ENCODE measurements at regions of chr1 and their contacts with region 1.

Region 1: GRCh38 chr1:214584805-214585766 is 17.9 kb upstream of the CENPF start:
- DNase-seq: no peak
- ATAC-seq: peak; percentile 33
- H3K4me3 Mint-ChIP-seq: no peak overlapping the region
- H3K27ac Mint-ChIP-seq: no peak overlapping the region
- H3K4me1 Mint-ChIP-seq: no peaks in the 10 kb centered on the region
- H3K27me3 Mint-ChIP-seq: peaks cover 11% of the 10 kb centered on the region

Region 2: DNA sequence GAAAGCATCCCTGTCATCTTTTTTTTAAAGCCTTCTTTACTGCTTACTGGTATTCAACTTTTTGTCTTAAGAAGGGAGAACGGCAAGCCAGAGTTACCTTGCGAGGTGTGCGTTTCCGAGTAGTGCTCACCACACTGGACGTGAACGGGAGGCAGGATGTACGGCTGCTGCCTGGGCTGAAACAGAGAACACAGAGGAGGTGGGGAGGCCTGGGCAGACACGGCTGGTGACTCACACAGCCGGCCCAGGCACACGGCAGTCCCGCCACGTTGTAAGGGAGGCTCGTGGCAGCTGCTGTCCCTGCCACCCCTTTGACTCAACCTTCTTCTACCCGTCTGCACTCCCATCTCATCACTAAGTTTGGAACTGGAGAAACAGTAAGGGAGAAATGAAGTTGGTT is 198.3 kb before region 1 on chr1:
- CTCF ChIA-PET with region 1: interaction called, 23 read pairs
- POLR2A ChIA-PET with region 1: no interaction called
- DNase-seq: no peak
- ATAC-seq: no peak
- H3K4me3 Mint-ChIP-seq: no peak overlapping the region
- H3K27ac Mint-ChIP-seq: no peak overlapping the region
- H3K4me1 Mint-ChIP-seq: peaks cover 4% of the 10 kb centered on the region
- H3K27me3 Mint-ChIP-seq: no peaks in the 10 kb centered on the region